Natural killer cell (primary cell): ENCODE measurements at regions of chr12 and their contacts with region 1.

Region 1: DNA sequence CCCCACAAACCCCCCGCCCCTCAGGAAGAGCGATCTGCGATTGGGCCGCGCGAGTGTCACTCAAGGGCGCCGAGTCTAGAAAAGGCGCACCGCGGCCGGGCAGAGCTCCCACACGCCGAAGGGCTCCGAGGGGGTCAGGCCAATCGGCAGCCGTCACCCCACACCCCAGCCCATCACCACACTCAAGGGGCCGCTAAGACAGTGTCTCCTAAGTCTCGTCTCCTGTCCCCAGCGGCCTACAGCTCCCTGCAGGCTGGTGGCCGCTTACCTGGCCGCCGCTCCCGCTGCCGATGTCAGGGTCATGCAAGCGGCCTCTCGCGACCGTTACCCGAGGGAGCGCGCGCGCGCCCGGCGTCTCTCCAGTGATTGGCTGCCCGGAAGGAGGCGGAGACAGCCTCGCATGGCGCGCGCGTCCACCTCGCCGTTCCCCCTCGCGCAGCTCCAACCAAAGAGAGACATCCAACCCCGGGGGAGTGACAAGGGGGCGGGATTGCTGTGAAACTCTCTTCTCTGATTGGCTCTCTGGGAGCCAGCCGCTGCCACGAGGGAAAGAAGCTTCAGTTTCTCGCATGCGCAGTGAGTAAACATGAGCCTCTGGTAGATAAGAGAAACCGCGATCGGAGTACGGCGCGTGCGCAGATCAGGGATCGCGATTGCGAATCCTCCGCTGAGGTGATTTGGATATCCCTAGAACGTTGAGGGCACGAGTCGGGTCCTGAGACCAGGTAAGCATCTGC is at the starts of genes MPHOSPH9 and MTRFR:
- DNase-seq: peak; percentile 98 to 99
- ATAC-seq: peak; percentile 91 to 98 (median 92)
- H3K4me3 ChIP-seq: peak within 1 kb of the TSS; percentile 92
- H3K4me3 Mint-ChIP-seq: peak within 1 kb of the TSS; percentile 98
- H3K27ac ChIP-seq: peak within 1 kb of the TSS; percentile 86
- H3K27ac Mint-ChIP-seq: peak within 1 kb of the TSS; percentile 99
- H3K4me1 ChIP-seq: peaks cover 50% of the 10 kb centered on the region
- H3K4me1 Mint-ChIP-seq: peaks cover 60 to 64% of the 10 kb centered on the region in 2 donors
- H3K27me3 ChIP-seq: no peaks in the 10 kb centered on the region
- H3K27me3 Mint-ChIP-seq: no peaks in the 10 kb centered on the region
- CTCF ChIP-seq: no peak
- total RNA-seq, gene MPHOSPH9: 97.6 to 114 (median 109) TPM
- total RNA-seq, gene MTRFR: 16.2 to 18.5 (median 17.0) TPM

Region 2: GRCh38 chr12:122860346-122861090 is 372.5 kb before region 1 on chr12:
- intact Hi-C with region 1: loop called (anchors 5 kb)
- DNase-seq: peak; percentile 81 to 88
- ATAC-seq: peak; percentile 63 to 81 (median 71)
- H3K4me3 ChIP-seq: no peak overlapping the region
- H3K4me3 Mint-ChIP-seq: no peak overlapping the region
- H3K27ac ChIP-seq: no peak overlapping the region
- H3K27ac Mint-ChIP-seq: peak overlapping the region; percentile 45 to 57
- H3K4me1 ChIP-seq: peaks cover 23% of the 10 kb centered on the region
- H3K4me1 Mint-ChIP-seq: peaks cover 7 to 12% of the 10 kb centered on the region in 2 donors
- H3K27me3 ChIP-seq: no peaks in the 10 kb centered on the region
- H3K27me3 Mint-ChIP-seq: no peaks in the 10 kb centered on the region
- CTCF ChIP-seq: peak; percentile 75

Region 3: GRCh38 chr12:123043536-123044001 is 189.4 kb before region 1 on chr12:
- intact Hi-C with region 1: loop called (anchors 5 kb)
- DNase-seq: peak; percentile 55 to 77
- ATAC-seq: peak; percentile 84 to 91 (median 87)
- H3K4me3 ChIP-seq: no peak overlapping the region
- H3K4me3 Mint-ChIP-seq: peak overlapping the region; percentile 42
- H3K27ac ChIP-seq: peak overlapping the region; percentile 28
- H3K27ac Mint-ChIP-seq: peak overlapping the region; percentile 47 to 70
- H3K4me1 ChIP-seq: peaks cover 23% of the 10 kb centered on the region
- H3K4me1 Mint-ChIP-seq: peaks cover 43 to 45% of the 10 kb centered on the region in 2 donors
- H3K27me3 ChIP-seq: no peaks in the 10 kb centered on the region
- H3K27me3 Mint-ChIP-seq: no peaks in the 10 kb centered on the region
- CTCF ChIP-seq: peak; percentile 53

Region 4: GRCh38 chr12:123106628-123107359 is 126.2 kb before region 1 on chr12:
- intact Hi-C with region 1: loop called (anchors 5 kb)
- DNase-seq: peak; percentile 41 to 65
- ATAC-seq: peak; percentile 62 to 76 (median 76)
- H3K4me3 ChIP-seq: no peak overlapping the region
- H3K4me3 Mint-ChIP-seq: peak overlapping the region; percentile 72
- H3K27ac ChIP-seq: peak overlapping the region; percentile 73
- H3K27ac Mint-ChIP-seq: peak overlapping the region; percentile 82 to 90
- H3K4me1 ChIP-seq: peaks cover 59% of the 10 kb centered on the region
- H3K4me1 Mint-ChIP-seq: peaks cover 65 to 67% of the 10 kb centered on the region in 2 donors
- H3K27me3 ChIP-seq: no peaks in the 10 kb centered on the region
- H3K27me3 Mint-ChIP-seq: no peaks in the 10 kb centered on the region
- CTCF ChIP-seq: no peak

Region 5: GRCh38 chr12:123126186-123127006 is 106.6 kb before region 1 on chr12:
- intact Hi-C with region 1: no loop called
- DNase-seq: no peak
- ATAC-seq: no peak
- H3K4me3 ChIP-seq: no peak overlapping the region
- H3K4me3 Mint-ChIP-seq: no peak overlapping the region
- H3K27ac ChIP-seq: no peak overlapping the region
- H3K27ac Mint-ChIP-seq: no peak overlapping the region
- H3K4me1 ChIP-seq: peaks cover 25% of the 10 kb centered on the region
- H3K4me1 Mint-ChIP-seq: peaks cover 23 to 25% of the 10 kb centered on the region in 2 donors
- H3K27me3 ChIP-seq: no peaks in the 10 kb centered on the region
- H3K27me3 Mint-ChIP-seq: no peaks in the 10 kb centered on the region
- CTCF ChIP-seq: no peak

Region 6: DNA sequence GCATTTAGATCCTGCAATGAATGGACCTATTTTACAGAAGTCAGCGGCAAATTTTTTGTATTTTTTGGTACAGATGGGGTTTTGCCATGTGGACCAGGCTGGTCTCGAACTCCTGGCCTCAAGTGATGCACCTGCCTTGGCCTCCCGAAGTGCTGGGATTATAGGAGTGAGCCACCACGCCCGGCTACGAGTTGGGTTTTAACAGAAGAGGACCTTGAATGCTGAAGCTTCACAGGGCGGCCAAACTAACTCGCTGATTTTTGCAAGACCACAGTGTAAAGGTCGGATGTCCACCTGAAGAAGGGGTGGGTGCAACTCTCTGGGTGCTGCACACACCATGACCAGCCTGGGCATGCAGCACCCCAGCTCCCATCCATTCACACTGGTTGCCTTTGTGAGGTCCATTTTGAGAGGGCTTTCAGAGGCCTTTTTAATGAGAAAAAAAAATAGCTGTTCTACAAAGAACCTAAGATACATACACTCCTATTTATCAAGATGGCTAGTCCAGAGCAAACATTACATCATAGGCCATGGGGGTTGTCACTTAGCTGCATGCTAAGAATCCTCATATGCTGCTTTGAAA is 60.3 kb after region 1 on chr12:
- intact Hi-C with region 1: no loop called
- DNase-seq: no peak
- ATAC-seq: no peak
- H3K4me3 ChIP-seq: no peak overlapping the region
- H3K4me3 Mint-ChIP-seq: no peak overlapping the region
- H3K27ac ChIP-seq: no peak overlapping the region
- H3K27ac Mint-ChIP-seq: no peak overlapping the region
- H3K4me1 ChIP-seq: no peaks in the 10 kb centered on the region
- H3K4me1 Mint-ChIP-seq: no peaks in the 10 kb centered on the region
- H3K27me3 ChIP-seq: no peaks in the 10 kb centered on the region
- H3K27me3 Mint-ChIP-seq: no peaks in the 10 kb centered on the region
- CTCF ChIP-seq: no peak

Region 7: DNA sequence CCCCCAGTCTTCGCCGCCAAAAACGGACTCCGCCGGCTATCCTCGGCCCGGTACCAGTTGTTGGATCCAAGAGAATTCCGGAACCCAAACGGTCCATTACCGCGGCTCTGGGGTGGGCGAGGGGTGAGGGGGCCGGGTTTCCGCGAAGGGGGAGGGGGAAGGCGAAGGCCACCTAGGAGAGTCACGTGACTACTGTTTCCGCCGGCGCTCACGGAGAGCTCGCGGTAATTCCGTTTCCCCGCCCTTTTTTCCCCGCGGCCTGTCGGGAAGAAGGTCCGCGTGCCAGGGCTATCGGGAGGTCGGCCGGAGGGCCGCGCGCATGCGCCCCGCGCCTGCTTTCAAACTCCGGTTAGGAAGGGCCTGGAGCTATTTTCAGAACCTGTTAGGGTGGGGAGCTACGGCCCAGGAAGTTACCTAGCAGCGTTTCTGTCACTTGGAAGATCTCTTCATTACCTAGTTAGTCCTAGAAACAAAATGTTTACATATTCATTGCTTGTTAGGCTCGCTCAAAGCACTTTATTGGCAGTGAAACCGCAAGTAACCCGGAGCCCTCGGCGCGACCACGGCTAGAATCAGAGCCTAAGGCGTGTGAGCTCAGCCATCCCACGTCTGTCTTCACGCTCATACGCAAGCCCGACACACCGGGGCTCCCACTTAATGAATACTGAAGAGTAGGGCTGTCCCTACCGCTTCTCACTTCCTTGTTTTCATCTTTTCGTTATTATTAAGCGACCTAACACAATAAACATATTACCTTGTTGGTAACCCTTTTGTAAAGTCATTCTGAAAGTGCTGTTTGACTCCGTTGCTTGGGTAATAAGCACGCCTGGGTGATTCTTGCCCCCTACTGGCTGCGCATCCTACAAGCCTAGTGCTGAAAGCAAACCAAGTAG is 132.3 kb after region 1 on chr12:
- intact Hi-C with region 1: loop called (anchors 10 kb)
- DNase-seq: peak; percentile 95 to 100
- ATAC-seq: peak; percentile 72 to 89 (median 80)
- H3K4me3 ChIP-seq: peak overlapping the region; percentile 67
- H3K4me3 Mint-ChIP-seq: peak overlapping the region; percentile 95
- H3K27ac ChIP-seq: peak overlapping the region; percentile 95
- H3K27ac Mint-ChIP-seq: peak overlapping the region; percentile 95 to 96
- H3K4me1 ChIP-seq: peaks cover 28% of the 10 kb centered on the region
- H3K4me1 Mint-ChIP-seq: peaks cover 23 to 25% of the 10 kb centered on the region in 2 donors
- H3K27me3 ChIP-seq: no peaks in the 10 kb centered on the region
- H3K27me3 Mint-ChIP-seq: no peaks in the 10 kb centered on the region
- CTCF ChIP-seq: peak; percentile 83